ENCODE measurements at regions of chr14 and their contacts with region 1.

Region 1: DNA sequence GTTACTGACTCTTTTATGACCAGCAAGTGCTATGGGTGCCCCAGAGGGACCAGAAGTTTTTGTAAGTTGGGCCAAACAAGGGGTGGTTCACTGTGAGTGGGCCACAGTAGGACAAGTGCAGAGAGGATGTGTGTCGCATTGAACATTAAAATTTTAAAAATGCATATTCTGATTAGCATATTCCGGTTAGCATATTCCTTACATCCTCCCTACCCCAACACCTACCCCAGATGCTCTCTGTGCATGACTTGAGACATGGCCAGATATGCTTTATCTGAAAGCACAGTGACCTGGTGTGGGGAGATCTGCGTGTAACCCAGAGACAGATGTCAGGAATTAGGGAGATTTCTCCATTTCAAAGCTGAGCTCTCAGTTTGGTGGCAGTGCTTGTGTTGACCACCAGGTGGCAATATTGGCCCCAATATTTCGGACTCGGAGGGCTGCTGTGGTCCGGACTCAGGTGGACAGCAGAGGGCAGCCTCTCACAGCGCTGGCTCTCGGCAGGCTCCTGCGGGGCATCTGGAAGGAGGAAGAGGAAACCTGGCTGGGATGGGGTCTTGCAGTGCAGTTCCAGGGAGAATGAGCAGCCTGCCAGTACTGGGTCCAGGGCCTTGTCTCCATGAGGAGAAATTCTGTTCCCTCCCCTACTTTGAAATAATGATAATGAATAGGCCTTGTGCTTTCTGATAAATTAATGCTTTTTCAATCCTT is 1.6 kb upstream of the CEBPE start:
- DNase-seq: peak; percentile 89
- ATAC-seq: peak; percentile 95
- H3K4me3 ChIP-seq: peak overlapping the region in 4 of 5 experiments; percentile 27 to 36 (median 30)
- H3K4me3 Mint-ChIP-seq: peak overlapping the region; percentile 79
- H3K27ac ChIP-seq: peak overlapping the region; percentile 72 to 88
- H3K27ac Mint-ChIP-seq: peak overlapping the region; percentile 89
- H3K4me1 ChIP-seq: peaks cover 32 to 35% of the 10 kb centered on the region in 2 donors
- H3K4me1 Mint-ChIP-seq: peaks cover 34% of the 10 kb centered on the region
- H3K27me3 ChIP-seq: no peaks in the 10 kb centered on the region
- H3K27me3 Mint-ChIP-seq: peaks cover 7% of the 10 kb centered on the region
- CTCF ChIP-seq: peak; percentile 99

Region 2: GRCh38 chr14:22837114-22837749 is 283.5 kb before region 1 on chr14:
- CTCF ChIA-PET with region 1: no interaction called
- POLR2A ChIA-PET with region 1: no interaction called
- intact Hi-C with region 1: no loop called
- DNase-seq: peak; percentile 49
- ATAC-seq: peak; percentile 39
- H3K4me3 ChIP-seq: peak overlapping the region; percentile 30 to 66 (median 62)
- H3K4me3 Mint-ChIP-seq: peak overlapping the region; percentile 96
- H3K27ac ChIP-seq: no peak overlapping the region
- H3K27ac Mint-ChIP-seq: peak overlapping the region; percentile 94
- H3K4me1 ChIP-seq: peaks cover 18 to 22% of the 10 kb centered on the region in 2 donors
- H3K4me1 Mint-ChIP-seq: peaks cover 19% of the 10 kb centered on the region
- H3K27me3 ChIP-seq: peaks cover 0 to 29% (median 11%) of the 10 kb centered on the region in 4 experiments
- H3K27me3 Mint-ChIP-seq: peaks cover 4% of the 10 kb centered on the region
- CTCF ChIP-seq: no peak

Region 3: DNA sequence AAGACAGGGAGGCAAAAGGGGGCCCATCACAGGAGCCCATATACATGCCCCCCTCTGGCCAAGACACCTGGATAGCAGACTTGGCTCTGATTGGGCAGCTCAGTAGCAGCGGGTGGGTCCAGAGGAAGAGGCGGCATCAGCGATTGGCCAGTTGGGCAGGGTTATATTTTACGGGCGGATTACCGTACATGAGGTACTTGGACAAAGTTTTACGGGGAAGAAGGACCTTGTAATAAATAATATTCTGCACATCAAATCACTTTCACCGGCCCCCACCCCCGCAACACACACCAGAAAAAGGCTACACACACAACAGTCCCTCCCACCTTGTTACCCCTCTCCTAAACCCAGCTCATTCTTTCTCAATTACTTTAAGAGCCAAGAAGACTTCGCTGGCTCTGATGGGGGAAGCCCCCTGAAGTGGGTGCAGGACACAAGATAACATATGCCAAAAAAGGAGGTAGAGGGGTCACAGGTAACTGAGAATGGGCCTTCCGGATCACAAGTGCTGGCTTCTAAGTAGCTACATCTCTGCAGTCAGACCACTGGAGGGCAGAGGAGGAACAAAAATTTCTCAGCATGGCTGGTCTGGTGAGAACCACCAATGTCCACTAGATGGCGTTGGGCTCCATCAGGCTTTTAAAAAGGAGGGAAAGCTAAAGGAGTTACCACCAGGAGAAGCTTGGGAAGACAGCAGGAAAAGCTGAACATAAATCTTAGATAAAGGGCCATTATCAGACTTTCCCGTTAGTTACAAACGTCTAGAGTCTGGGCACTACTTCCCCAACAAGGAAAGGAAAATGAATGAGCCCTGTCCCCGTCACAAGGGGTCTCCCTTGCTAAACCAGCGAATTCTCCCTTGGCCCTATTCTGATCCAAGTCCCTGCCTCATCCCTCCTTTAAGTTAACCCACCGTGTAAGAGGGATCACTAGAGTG is 52.0 kb before region 1 on chr14:
- CTCF ChIA-PET with region 1: interaction called, 13 read pairs
- POLR2A ChIA-PET with region 1: interaction called, 5 read pairs
- intact Hi-C with region 1: no loop called
- DNase-seq: peak; percentile 87
- ATAC-seq: peak; percentile 85
- H3K4me3 ChIP-seq: no peak overlapping the region
- H3K4me3 Mint-ChIP-seq: no peak overlapping the region
- H3K27ac ChIP-seq: peak overlapping the region; percentile 10 to 28
- H3K27ac Mint-ChIP-seq: peak overlapping the region; percentile 83
- H3K4me1 ChIP-seq: peaks cover 21 to 41% of the 10 kb centered on the region in 2 donors
- H3K4me1 Mint-ChIP-seq: peaks cover 38% of the 10 kb centered on the region
- H3K27me3 ChIP-seq: no peaks in the 10 kb centered on the region
- H3K27me3 Mint-ChIP-seq: no peaks in the 10 kb centered on the region
- CTCF ChIP-seq: peak; percentile 99

Region 4: DNA sequence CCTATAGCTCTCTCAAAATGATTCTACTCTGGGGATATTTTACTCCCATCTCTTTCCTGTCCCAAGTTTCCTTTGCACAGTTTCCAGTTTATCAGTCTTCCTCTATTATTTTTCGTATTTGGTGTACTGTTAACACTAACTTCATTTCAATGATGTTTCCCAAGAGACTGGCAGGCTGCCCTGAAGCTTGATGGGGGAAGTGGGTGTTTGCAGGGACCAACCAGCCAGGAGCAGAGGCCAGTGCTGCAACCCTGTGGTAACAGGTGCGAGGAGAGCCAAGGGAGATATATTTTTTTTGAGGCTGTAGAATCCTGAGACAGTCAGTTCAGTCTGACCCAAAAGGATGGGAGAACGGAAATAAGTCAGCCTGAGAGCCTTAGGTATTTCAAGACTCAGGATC is 10.2 kb after region 1 on chr14:
- CTCF ChIA-PET with region 1: interaction called, 26 read pairs
- POLR2A ChIA-PET with region 1: no interaction called
- intact Hi-C with region 1: no loop called
- DNase-seq: no peak
- ATAC-seq: no peak
- H3K4me3 ChIP-seq: no peak overlapping the region
- H3K4me3 Mint-ChIP-seq: no peak overlapping the region
- H3K27ac ChIP-seq: no peak overlapping the region
- H3K27ac Mint-ChIP-seq: no peak overlapping the region
- H3K4me1 ChIP-seq: peaks cover 7 to 11% of the 10 kb centered on the region in 2 donors
- H3K4me1 Mint-ChIP-seq: peaks cover 14% of the 10 kb centered on the region
- H3K27me3 ChIP-seq: no peaks in the 10 kb centered on the region
- H3K27me3 Mint-ChIP-seq: no peaks in the 10 kb centered on the region
- CTCF ChIP-seq: no peak

Region 5: DNA sequence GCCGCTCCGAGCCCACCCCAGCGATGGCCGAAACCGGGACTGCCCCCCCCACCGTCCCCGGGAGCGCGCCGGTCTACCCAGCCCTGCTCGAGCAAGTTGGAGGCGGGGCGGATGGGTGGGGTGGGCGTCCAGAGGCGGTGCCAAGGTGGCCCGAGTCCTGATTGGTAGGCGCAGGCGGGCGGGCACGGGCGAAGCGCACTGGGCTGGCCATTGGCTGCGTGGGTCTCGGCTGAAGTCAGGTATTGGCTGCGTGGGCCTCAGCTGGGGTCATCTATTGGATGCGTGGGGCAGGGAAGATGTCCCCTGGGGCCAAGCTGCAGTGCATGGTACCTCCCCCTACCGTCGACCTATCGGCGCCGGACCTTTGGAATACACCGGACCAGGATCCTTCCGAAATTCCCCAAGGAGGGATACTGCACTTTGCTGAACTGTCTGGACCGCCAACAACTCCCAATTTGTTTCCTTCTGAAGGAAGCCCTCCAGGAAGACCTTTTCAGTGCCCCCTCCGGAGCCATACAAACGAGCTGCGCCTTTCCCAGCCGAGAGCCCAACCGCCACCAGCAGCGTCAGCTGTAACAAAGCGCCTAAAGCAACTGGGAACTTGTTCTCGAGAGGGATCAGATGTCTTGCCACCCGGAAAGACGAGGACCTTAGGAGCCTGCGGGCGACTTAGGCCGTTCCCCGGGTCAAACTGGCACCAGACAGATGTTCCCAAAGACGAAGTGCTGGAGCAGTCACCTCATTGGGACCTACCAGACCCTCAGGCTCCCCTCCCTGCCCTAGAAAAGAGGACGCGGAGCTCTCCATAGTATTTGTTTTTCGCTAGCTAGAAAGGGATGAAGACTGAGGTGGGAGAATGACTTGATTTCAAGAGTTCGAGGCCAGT is 165.6 kb after region 1 on chr14 and contains the start of gene HOMEZ:
- CTCF ChIA-PET with region 1: interaction called, 4 read pairs
- POLR2A ChIA-PET with region 1: no interaction called
- intact Hi-C with region 1: loop called (anchors 1 kb)
- DNase-seq: peak; percentile 97
- ATAC-seq: peak; percentile 97
- H3K4me3 ChIP-seq: peak within 1 kb of the TSS; percentile 56 to 90 (median 83)
- H3K4me3 Mint-ChIP-seq: peak within 1 kb of the TSS; percentile 98
- H3K27ac ChIP-seq: peak within 1 kb of the TSS; percentile 49 to 83
- H3K27ac Mint-ChIP-seq: peak within 1 kb of the TSS; percentile 93
- H3K4me1 ChIP-seq: peaks cover 13 to 17% of the 10 kb centered on the region in 2 donors
- H3K4me1 Mint-ChIP-seq: peaks cover 23% of the 10 kb centered on the region
- H3K27me3 ChIP-seq: no peaks in the 10 kb centered on the region
- H3K27me3 Mint-ChIP-seq: no peaks in the 10 kb centered on the region
- CTCF ChIP-seq: no peak
- total RNA-seq, gene HOMEZ: 15.5 TPM in 2 replicates

Region 6: GRCh38 chr14:23327947-23328744 is 207.4 kb after region 1 on chr14:
- CTCF ChIA-PET with region 1: interaction called, 32 read pairs
- POLR2A ChIA-PET with region 1: no interaction called
- intact Hi-C with region 1: loop called (anchors 2 kb)
- DNase-seq: peak; percentile 77
- ATAC-seq: peak; percentile 80
- H3K4me3 ChIP-seq: no peak overlapping the region
- H3K4me3 Mint-ChIP-seq: no peak overlapping the region
- H3K27ac ChIP-seq: no peak overlapping the region
- H3K27ac Mint-ChIP-seq: peak overlapping the region; percentile 2
- H3K4me1 ChIP-seq: peaks cover 1% of the 10 kb centered on the region in 2 donors
- H3K4me1 Mint-ChIP-seq: peaks cover 7% of the 10 kb centered on the region
- H3K27me3 ChIP-seq: peaks cover 0 to 2% (median 0%) of the 10 kb centered on the region in 4 experiments
- H3K27me3 Mint-ChIP-seq: peaks cover 3% of the 10 kb centered on the region
- CTCF ChIP-seq: peak; percentile 95